Natural killer cell (primary cell): ENCODE measurements at regions of chr5 and their contacts with region 1.

Region 1: GRCh38 chr5:159444441-159445082 is 114.3 kb upstream of the IL12B start:
- DNase-seq: peak in 1 of 2 donors; percentile 65
- ATAC-seq: peak in 1 of 3 donors; percentile 42
- H3K4me3 ChIP-seq: no peak overlapping the region
- H3K4me3 Mint-ChIP-seq: no peak overlapping the region
- H3K27ac ChIP-seq: no peak overlapping the region
- H3K27ac Mint-ChIP-seq: no peak overlapping the region
- H3K4me1 ChIP-seq: peaks cover 3% of the 10 kb centered on the region
- H3K4me1 Mint-ChIP-seq: peaks cover 0 to 10% of the 10 kb centered on the region in 2 donors
- H3K27me3 ChIP-seq: no peaks in the 10 kb centered on the region
- H3K27me3 Mint-ChIP-seq: peaks cover 11 to 22% of the 10 kb centered on the region in 2 donors
- CTCF ChIP-seq: peak; percentile 12

Region 2: GRCh38 chr5:159987031-159987674 is 542.6 kb after region 1 on chr5:
- intact Hi-C with region 1: loop called (anchors 5 kb)
- DNase-seq: peak; percentile 41 to 82
- ATAC-seq: peak; percentile 60 to 89 (median 87)
- H3K4me3 ChIP-seq: peak overlapping the region; percentile 9
- H3K4me3 Mint-ChIP-seq: peak overlapping the region; percentile 31
- H3K27ac ChIP-seq: no peak overlapping the region
- H3K27ac Mint-ChIP-seq: no peak overlapping the region
- H3K4me1 ChIP-seq: peaks cover 9% of the 10 kb centered on the region
- H3K4me1 Mint-ChIP-seq: peaks cover 0 to 6% of the 10 kb centered on the region in 2 donors
- H3K27me3 ChIP-seq: peaks cover 8% of the 10 kb centered on the region
- H3K27me3 Mint-ChIP-seq: peaks cover 46 to 78% of the 10 kb centered on the region in 2 donors
- CTCF ChIP-seq: peak; percentile 29